ENCODE measurements at regions of chr17 and their contacts with region 1.

Region 1: GRCh38 chr17:37239690-37240334 is 136.0 kb upstream of the C17orf78 start:
- DNase-seq: peak; percentile 43
- CTCF ChIP-seq: peak; percentile 58

Region 2: DNA sequence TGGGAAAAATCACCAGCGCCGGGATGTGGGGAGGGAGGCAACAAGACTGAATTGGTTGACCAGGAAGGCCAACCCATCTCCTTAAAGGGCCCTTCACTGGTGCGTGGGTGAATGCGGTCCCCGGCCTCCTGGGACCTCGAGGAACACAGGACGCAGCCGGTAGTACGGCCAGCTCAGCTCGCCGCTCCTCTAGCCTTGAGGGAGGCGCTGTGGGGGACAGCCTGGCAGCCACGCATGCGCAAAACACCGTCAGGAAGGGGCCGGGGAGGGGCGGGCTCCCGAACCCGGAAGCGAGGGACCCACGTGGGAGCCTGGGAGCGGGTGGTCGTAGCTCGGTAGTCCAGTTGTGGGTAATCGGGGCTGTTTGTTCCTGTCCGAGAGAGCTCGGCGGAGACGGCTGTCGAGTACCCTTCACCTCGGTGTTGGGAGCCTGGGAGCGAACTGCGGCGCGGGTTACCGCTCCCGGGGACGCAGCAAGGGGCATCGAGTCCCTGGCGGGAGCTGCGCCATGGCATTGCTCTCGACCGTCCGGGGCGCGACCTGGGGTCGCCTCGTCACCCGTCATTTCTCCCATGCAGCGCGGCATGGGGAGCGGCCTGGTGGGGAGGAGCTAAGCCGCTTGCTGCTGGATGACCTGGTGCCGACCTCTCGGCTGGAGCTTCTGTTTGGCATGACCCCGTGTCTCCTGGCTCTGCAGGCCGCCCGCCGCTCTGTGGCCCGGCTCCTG is 638.3 kb before region 1 on chr17 and contains the start of gene MRM1:
- in situ Hi-C with region 1: loop called (anchors 25 kb)
- DNase-seq: peak; percentile 96
- CTCF ChIP-seq: peak; percentile 23

Measured in GM13976 (cell line).